ENCODE measurements at regions of chr15 and their contacts with region 1.

Region 1: GRCh38 chr15:75647370-75648155 is at the start of gene SNX33:
- DNase-seq: peak; percentile 81 to 89
- ATAC-seq: peak; percentile 84 to 90
- H3K4me3 ChIP-seq: peak within 1 kb of the TSS; percentile 75
- H3K27ac ChIP-seq: peak within 1 kb of the TSS; percentile 91 to 94
- H3K4me1 ChIP-seq: peaks cover 41% of the 10 kb centered on the region
- CTCF ChIP-seq: peak; percentile 67
- EP300 ChIP-seq: no peak
- POLR2A ChIP-seq: peak; percentile 83
- RAD21 ChIP-seq: peak in 1 of 2 experiments; percentile 42; a peak in 2 of 5 replicates
- polyA plus RNA-seq, gene SNX33: 8.4 and 10.7 TPM in 2 replicates

Region 2: GRCh38 chr15:75453703-75454470 is 193.7 kb before region 1 on chr15:
- CTCF ChIA-PET with region 1: interaction called, 4 read pairs
- POLR2A ChIA-PET with region 1: interaction called, 15 read pairs
- DNase-seq: peak; percentile 99 to 100
- ATAC-seq: peak; percentile 22 to 57
- H3K4me3 ChIP-seq: peak overlapping the region; percentile 74
- H3K27ac ChIP-seq: peak overlapping the region; percentile 92
- H3K4me1 ChIP-seq: peaks cover 18% of the 10 kb centered on the region
- CTCF ChIP-seq: no peak
- EP300 ChIP-seq: no peak
- POLR2A ChIP-seq: peak; percentile 53
- RAD21 ChIP-seq: no peak; a peak in 1 of 5 replicates

Region 3: GRCh38 chr15:75661091-75661777 is 13.7 kb after region 1 on chr15:
- CTCF ChIA-PET with region 1: interaction called, 394 read pairs
- POLR2A ChIA-PET with region 1: interaction called, 22 read pairs
- DNase-seq: peak; percentile 83 to 84
- ATAC-seq: peak; percentile 80 to 94
- H3K4me3 ChIP-seq: no peak overlapping the region
- H3K27ac ChIP-seq: peak overlapping the region; percentile 78 to 83
- H3K4me1 ChIP-seq: peaks cover 57% of the 10 kb centered on the region
- CTCF ChIP-seq: no peak
- EP300 ChIP-seq: no peak
- POLR2A ChIP-seq: no peak
- RAD21 ChIP-seq: no peak; a peak in 1 of 5 replicates

Region 4: DNA sequence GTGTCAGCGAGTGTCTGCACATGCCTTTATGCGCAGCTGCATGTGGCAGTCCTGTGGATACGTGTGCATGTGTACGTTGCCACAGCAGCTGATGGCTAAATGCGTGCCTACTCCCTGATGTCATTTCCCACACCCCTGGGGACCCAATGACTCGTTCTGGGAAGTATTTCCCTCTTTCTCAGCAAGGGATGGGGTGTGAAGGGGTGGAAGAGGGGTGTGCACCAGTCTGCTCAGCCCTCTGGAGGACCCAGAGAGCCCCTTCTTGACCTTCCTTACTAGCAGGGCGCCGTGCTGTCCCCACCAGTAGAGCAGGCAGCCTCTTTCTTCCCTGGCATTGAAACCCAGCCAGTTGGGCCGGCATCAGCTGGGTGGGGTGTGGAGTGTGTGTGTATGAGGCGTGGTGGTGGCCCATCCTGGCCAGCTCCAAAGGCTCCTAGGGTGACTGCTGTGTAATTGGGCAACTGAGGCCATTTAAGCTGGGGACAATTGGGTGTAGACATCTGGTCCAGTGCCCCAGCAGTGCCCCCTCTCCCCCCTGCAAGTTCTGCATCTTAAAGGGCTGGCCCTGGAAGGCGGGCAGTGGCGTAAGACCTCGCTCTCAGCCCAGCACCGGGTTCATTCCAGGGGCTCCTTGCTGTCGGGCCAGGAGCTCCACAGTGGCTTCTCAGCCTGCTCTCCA is 19.4 kb after region 1 on chr15:
- CTCF ChIA-PET with region 1: interaction called, 394 read pairs
- POLR2A ChIA-PET with region 1: interaction called, 4 read pairs
- DNase-seq: peak; percentile 96 to 98
- ATAC-seq: peak; percentile 85
- H3K4me3 ChIP-seq: no peak overlapping the region
- H3K27ac ChIP-seq: peak overlapping the region; percentile 70 to 83
- H3K4me1 ChIP-seq: peaks cover 65% of the 10 kb centered on the region
- CTCF ChIP-seq: no peak
- EP300 ChIP-seq: peak; percentile 27 to 49; a peak in 3 of 5 replicates
- POLR2A ChIP-seq: no peak
- RAD21 ChIP-seq: no peak

Region 5: DNA sequence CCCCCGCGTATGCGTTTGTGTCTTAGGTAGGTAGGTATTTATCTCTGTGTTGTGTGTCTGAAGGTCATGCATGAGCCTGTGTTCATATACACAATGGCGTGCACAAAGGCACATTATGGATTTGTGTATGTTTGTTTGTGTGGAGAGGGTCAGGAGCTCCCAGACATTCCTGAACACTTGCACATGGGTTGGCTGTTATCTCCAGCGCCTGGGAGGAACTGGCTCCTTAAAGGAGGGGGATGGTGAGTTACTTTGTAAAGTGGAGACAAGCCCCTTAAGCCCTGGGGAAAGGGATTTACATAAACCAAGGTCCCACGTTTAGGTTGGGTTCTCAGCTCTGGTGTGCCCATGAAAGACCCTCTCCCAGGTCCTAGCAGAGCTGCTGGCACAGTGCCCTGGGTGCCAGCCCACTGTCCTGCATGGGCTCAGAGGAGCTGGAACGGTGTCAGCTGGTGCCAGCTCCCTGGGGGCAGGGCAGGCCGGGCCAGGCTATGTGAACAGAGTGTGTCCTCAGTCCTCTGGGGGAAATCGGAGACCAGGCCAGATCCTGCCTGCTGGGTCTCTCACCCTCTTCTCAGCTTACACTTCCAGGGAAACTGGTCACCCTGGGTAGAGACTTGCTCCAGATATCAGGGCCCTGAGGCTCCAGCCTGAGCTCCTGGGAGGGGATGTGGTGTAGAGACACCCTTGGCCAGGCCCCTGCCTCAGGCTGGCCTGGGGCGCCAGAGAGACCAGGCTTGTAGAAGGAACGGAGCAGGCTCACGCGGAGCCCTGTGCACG is 25.3 kb after region 1 on chr15:
- CTCF ChIA-PET with region 1: interaction called, 394 read pairs
- POLR2A ChIA-PET with region 1: interaction called, 5 read pairs
- DNase-seq: peak in 1 of 2 experiments; percentile 32
- ATAC-seq: peak; percentile 1 to 38; a peak in 3 of 6 replicates
- H3K4me3 ChIP-seq: no peak overlapping the region
- H3K27ac ChIP-seq: peak overlapping the region; percentile 66 to 78
- H3K4me1 ChIP-seq: peaks cover 32% of the 10 kb centered on the region
- CTCF ChIP-seq: no peak
- EP300 ChIP-seq: no peak
- POLR2A ChIP-seq: no peak
- RAD21 ChIP-seq: no peak

Measured in A549 (cell line).